T-cell (primary cell): ENCODE measurements at regions of chr15 and their contacts with region 1.

Region 1: DNA sequence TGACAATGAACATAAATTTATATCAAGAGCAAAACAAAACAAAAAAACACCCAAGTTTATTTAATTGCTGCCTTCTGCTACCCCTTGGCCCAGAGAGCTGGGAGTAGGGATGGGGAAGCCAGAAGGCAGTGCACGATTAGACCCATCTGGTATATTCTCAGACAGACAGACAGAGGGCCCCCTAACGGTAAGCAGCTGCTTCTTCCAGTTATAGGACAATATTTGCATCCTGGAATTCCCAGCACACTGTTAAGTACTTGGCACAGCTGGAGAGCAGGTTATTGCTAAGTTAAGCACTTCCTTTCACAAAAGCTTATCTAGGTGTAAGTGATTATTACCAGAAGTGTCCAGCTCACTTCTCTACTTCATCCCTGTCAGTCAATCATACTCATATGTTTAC is 39.3 kb downstream of the C2CD4B start:
- DNase-seq: no peak
- ATAC-seq: no peak
- H3K4me3 ChIP-seq: no peak overlapping the region
- H3K4me3 Mint-ChIP-seq: no peak overlapping the region
- H3K27ac ChIP-seq: no peak overlapping the region
- H3K27ac Mint-ChIP-seq: peak overlapping the region; percentile 34 to 39
- H3K4me1 ChIP-seq: peaks cover 17% of the 10 kb centered on the region in 2 experiments
- H3K4me1 Mint-ChIP-seq: peaks cover 45 to 60% (median 54%) of the 10 kb centered on the region in 3 donors
- H3K27me3 ChIP-seq: no peaks in the 10 kb centered on the region
- H3K27me3 Mint-ChIP-seq: no peaks in the 10 kb centered on the region

Region 2: DNA sequence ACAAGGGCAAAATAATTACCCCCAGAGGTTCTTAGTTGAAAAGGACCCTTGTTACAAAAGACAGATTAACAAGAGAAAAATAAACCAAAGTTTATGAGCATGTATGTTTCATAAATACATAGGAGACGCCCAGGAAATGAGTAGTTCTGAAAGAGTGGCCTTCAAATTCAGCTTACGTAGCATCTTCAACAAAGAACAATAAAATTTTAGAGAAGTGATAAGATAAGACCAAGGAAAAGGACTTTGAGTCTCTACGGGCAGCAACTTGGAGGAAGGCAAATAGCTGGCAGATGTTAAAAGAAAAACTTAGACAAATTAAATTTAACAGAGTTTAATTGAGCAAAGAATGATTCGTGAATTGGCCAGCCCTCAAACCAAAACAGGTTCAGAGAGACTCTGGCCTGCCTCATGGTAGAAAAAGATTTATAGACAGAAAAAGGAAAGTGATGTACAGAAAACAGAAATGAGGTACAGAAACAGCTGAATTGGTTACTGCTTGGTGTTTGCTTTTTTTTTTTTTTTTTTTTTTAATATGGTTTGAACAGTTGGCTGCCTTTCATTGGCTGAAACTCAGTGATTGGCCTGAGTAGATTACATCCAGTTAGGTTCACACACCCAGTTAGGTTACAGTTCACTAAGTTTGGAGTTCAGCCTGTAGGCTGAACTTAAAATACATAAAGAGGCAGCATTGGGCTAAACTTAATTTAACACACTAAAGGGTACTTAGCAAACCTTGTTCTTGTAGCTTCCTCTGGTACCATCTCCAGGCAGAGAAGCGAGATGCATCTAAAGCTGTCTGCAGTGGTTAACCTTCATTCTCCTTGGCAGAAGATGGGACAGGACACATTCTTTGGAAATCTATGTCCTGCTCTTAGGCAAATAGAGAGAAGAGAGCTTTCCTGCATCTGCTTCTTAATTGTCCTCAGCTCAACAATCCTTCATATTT is 16.1 kb after region 1 on chr15:
- CTCF ChIA-PET with region 1: interaction called in 1 of 2 experiments, 4 read pairs
- POLR2A ChIA-PET with region 1: interaction called in 1 of 2 experiments, 10 read pairs
- DNase-seq: no peak
- ATAC-seq: no peak
- H3K4me3 ChIP-seq: no peak overlapping the region
- H3K4me3 Mint-ChIP-seq: no peak overlapping the region
- H3K27ac ChIP-seq: no peak overlapping the region
- H3K27ac Mint-ChIP-seq: peak overlapping the region in 1 of 2 donors; percentile 4
- H3K4me1 ChIP-seq: peaks cover 0 to 2% of the 10 kb centered on the region in 2 experiments
- H3K4me1 Mint-ChIP-seq: peaks cover 0 to 5% (median 2%) of the 10 kb centered on the region in 3 donors
- H3K27me3 ChIP-seq: peaks cover 0 to 5% of the 10 kb centered on the region in 2 experiments
- H3K27me3 Mint-ChIP-seq: peaks cover 3 to 7% of the 10 kb centered on the region in 2 donors